Caco-2 (cell line): ENCODE measurements at regions of chr17 and their contacts with region 1.

Region 1: DNA sequence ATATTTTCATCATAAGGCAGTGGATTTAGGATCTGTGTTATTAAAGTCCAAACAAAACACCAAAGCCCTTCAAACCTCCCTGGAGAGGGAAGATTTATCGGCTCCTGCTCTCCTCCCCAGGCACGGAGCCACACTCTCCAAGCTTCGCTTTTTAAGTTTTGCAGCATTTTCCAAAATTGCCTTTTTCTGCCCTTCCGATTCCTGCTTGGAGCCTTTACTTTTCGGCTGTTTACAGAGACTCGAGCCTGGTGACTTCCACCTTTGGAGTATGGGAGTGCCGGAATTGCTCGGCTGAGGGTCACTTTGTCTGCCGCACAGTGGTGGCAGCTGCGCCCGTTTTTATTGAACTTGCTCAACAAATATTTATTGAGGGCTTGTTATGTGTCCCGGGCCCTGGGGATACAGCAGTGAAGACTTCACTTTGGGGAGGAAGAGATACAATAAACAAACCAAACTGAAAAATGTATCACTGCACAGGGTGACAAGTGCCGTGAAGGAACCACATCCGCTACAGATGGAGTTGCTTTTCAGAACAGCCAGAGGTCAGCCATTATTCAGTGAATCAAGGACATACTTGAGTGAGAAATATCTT is 185.5 kb downstream of the NTN1 start:
- DNase-seq: peak in 1 of 2 experiments; percentile 17
- H3K4me3 ChIP-seq: no peak overlapping the region
- H3K4me3 Mint-ChIP-seq: peak overlapping the region; percentile 19
- H3K27ac Mint-ChIP-seq: no peak overlapping the region
- H3K4me1 ChIP-seq: 0 out of 2 replicates have a peak, but pooled peaks cover 4% of the 10 kb centered on the region
- H3K4me1 Mint-ChIP-seq: no peaks in the 10 kb centered on the region
- H3K27me3 ChIP-seq: no peaks in the 10 kb centered on the region
- H3K27me3 Mint-ChIP-seq: peaks cover 2% of the 10 kb centered on the region
- CTCF ChIP-seq: no peak

Region 2: DNA sequence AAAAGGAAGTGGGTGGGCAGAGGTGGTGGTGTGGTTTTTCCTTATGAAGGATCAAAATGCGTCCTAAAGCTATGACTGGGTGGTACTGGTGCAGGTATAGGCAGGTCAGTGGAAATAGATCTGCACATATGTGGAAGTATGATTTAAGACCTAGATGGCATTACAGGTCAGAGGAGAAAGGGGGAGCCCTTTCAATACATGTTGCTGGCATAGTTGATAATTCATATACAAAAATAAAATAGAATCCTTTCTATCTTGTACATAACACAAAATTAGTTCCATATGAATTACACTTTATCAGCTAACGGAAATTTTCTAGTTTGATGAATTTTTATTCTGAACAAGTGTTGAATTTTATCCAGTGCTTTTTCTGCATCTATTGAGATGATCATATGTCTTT is 220.5 kb before region 1 on chr17:
- CTCF ChIA-PET with region 1: no interaction called
- POLR2A ChIA-PET with region 1: no interaction called
- intact Hi-C with region 1: no loop called
- DNase-seq: no peak
- H3K4me3 ChIP-seq: no peak overlapping the region
- H3K4me3 Mint-ChIP-seq: no peak overlapping the region
- H3K27ac Mint-ChIP-seq: no peak overlapping the region
- H3K4me1 ChIP-seq: no peaks in the 10 kb centered on the region
- H3K4me1 Mint-ChIP-seq: no peaks in the 10 kb centered on the region
- H3K27me3 ChIP-seq: no peaks in the 10 kb centered on the region
- H3K27me3 Mint-ChIP-seq: no peaks in the 10 kb centered on the region
- CTCF ChIP-seq: no peak

Region 3: DNA sequence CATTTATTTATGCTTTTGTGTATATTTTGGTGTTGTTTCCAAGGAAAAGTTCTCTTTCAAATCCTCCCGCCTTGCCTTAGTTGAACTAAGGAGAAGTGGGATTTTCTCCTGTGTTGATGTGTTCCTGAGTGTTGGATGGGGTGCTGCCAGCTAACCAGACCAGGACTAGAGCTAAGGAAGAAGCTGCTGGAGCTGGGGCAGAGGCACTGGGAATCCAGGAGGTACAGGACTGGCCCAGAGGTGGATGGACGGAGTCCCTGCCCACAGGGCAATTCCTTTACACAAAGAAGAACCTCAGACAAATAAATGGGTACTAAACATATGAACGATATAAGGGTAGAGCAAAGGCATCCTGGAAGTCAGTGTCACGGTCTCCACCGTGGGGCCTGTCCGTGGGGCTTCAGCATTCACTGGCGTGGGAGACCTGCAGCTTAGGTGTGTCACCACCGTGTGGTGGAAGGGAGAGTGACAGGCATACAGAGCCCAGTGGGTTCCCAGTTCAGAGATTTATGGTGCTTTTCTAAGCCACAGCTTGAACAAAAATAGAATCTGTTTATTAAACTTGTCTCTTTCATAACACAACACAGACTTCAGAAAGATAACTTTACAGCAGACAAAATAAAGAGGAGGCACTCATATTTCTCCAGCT is 85.2 kb after region 1 on chr17:
- CTCF ChIA-PET with region 1: no interaction called
- POLR2A ChIA-PET with region 1: no interaction called
- intact Hi-C with region 1: loop called (anchors 5 kb)
- DNase-seq: peak in 1 of 2 experiments; percentile 33
- H3K4me3 ChIP-seq: no peak overlapping the region
- H3K4me3 Mint-ChIP-seq: no peak overlapping the region
- H3K27ac Mint-ChIP-seq: no peak overlapping the region
- H3K4me1 ChIP-seq: no peaks in the 10 kb centered on the region
- H3K4me1 Mint-ChIP-seq: no peaks in the 10 kb centered on the region
- H3K27me3 ChIP-seq: no peaks in the 10 kb centered on the region
- H3K27me3 Mint-ChIP-seq: no peaks in the 10 kb centered on the region
- CTCF ChIP-seq: peak; percentile 53 to 60